ENCODE measurements at regions of chr12 and their contacts with region 1.

Region 1: GRCh38 chr12:30754709-30755394 is at the start of gene CAPRIN2:
- DNase-seq: peak; percentile 93
- ATAC-seq: peak; percentile 99
- H3K4me3 ChIP-seq: peak within 1 kb of the TSS; percentile 86
- H3K27ac ChIP-seq: peak within 1 kb of the TSS; percentile 67
- H3K4me1 ChIP-seq: peaks cover 10% of the 10 kb centered on the region
- H3K27me3 ChIP-seq: no peaks in the 10 kb centered on the region
- CTCF ChIP-seq: peak; percentile 43
- POLR2A ChIP-seq: peak; percentile 67
- RAD21 ChIP-seq: peak; percentile 14; the same call in 1 of the 2 replicates
- total RNA-seq, gene CAPRIN2: 23.1 and 23.8 TPM in 2 replicates

Region 2: DNA sequence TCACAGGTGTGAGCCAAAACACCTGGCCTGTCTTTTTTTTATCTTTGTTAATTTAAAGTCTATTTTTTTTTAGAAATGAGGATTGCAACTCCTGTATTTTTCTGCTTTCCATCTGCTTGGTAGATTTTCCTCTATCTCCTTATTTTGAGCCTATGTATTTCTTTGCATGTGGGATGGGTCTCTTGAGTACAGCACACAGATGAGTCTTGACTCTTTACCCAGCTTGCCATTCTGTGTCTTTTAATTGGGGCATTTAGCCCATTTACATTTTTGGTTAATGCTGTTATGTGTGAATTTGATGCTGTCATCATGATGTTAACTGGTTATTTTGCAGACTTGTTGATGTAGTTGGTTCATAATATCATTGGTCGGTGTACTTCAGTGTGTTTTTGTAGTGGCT is 376.5 kb before region 1 on chr12:
- CTCF ChIA-PET with region 1: no interaction called
- POLR2A ChIA-PET with region 1: no interaction called
- dilution Hi-C with region 1: no loop called
- in situ Hi-C with region 1: no loop called
- intact Hi-C with region 1: no loop called
- DNase-seq: no peak
- ATAC-seq: no peak
- H3K4me3 ChIP-seq: no peak overlapping the region
- H3K27ac ChIP-seq: no peak overlapping the region
- H3K4me1 ChIP-seq: no peaks in the 10 kb centered on the region
- H3K27me3 ChIP-seq: no peaks in the 10 kb centered on the region
- CTCF ChIP-seq: no peak
- POLR2A ChIP-seq: no peak
- RAD21 ChIP-seq: no peak

Region 3: DNA sequence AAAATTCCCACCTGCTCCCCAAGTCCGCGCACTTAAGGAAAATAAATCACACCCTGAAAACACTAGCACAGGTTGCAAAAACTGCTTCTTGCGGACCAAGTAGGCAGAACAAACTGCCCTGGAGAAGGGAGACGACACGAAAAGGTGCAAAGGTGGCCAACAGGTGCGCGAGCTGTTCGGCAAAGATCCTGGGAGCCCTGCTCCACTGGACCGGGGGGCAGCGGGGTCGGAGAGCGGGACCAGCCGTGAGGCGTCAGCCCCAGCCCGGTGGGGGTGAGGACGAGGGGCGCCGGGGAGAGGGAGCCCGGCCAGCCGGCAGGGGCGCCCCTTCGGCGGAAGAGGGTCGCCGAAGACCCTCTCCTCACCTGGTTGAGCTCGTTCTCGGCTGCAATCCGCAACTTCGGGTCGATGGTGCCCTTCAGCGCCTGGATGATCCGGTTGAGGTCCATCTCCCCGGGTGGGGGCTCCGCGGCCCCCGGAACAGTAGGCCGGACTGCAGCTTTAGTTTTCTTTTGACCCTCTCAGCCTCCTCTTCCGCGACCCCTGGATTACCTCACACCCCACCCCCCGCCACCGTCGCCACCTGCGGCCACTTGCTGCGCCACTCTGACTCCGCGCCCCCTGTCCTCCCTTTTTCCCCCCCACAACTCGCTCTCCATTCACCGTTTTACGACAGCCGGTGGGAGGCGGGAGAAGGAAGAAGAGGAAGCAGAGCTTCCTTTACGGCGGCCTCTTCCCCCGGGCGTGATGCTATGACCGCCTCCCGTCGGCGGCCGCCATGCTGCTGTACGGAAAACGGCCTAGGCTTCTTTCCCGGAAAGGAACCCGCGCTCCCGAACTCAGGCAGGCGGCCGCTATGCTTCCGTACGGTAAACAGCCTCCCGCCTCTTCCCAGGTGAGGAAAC is 59.4 kb before region 1 on chr12 and contains the start of gene IPO8:
- CTCF ChIA-PET with region 1: no interaction called
- POLR2A ChIA-PET with region 1: no interaction called
- dilution Hi-C with region 1: no loop called
- in situ Hi-C with region 1: no loop called
- intact Hi-C with region 1: loop called (anchors 2 kb)
- DNase-seq: peak; percentile 89
- ATAC-seq: peak; percentile 91
- H3K4me3 ChIP-seq: peak within 1 kb of the TSS; percentile 100
- H3K27ac ChIP-seq: peak within 1 kb of the TSS; percentile 77
- H3K4me1 ChIP-seq: peaks cover 6% of the 10 kb centered on the region
- H3K27me3 ChIP-seq: no peaks in the 10 kb centered on the region
- CTCF ChIP-seq: peak; percentile 23; the same call in 1 of the 2 replicates
- POLR2A ChIP-seq: no peak; the same call in 1 of the 2 replicates
- RAD21 ChIP-seq: 0 out of 2 replicates have a peak, but pooled peaks have one; percentile 3
- total RNA-seq, gene IPO8: 31.5 and 31.9 TPM in 2 replicates

Region 4: DNA sequence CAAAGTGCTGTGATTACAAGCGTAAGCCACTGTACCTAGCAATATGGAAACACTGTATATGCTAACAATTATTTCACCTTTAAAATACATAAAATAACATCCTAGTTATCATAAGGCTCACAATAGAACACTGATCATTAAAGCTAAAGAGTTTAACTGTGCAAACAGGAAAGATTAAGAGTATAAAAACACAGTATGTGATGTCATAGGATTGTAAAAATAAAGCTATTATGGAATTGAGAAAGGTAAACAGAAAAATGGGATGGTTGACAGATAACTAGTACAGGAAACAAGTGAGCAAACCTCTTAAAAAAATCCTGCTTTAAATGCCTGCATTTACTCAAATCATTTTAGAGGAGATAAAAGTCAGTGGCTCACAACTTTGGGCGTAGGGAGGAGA is 48.4 kb before region 1 on chr12:
- CTCF ChIA-PET with region 1: no interaction called
- POLR2A ChIA-PET with region 1: no interaction called
- dilution Hi-C with region 1: no loop called
- in situ Hi-C with region 1: no loop called
- intact Hi-C with region 1: no loop called
- DNase-seq: no peak
- ATAC-seq: no peak
- H3K4me3 ChIP-seq: no peak overlapping the region
- H3K27ac ChIP-seq: no peak overlapping the region
- H3K4me1 ChIP-seq: no peaks in the 10 kb centered on the region
- H3K27me3 ChIP-seq: no peaks in the 10 kb centered on the region
- CTCF ChIP-seq: no peak
- POLR2A ChIP-seq: no peak
- RAD21 ChIP-seq: no peak